Caco-2 (cell line): ENCODE measurements at regions of chr10 and their contacts with region 1.

Region 1: GRCh38 chr10:133245439-133246235 is 8.0 kb downstream of the VENTX start:
- DNase-seq: peak; percentile 91 to 94
- H3K4me3 ChIP-seq: no peak overlapping the region
- H3K4me3 Mint-ChIP-seq: no peak overlapping the region
- H3K27ac Mint-ChIP-seq: peak overlapping the region; percentile 15
- H3K4me1 ChIP-seq: peaks cover 43% of the 10 kb centered on the region
- H3K4me1 Mint-ChIP-seq: peaks cover 13% of the 10 kb centered on the region
- H3K27me3 ChIP-seq: no peaks in the 10 kb centered on the region
- H3K27me3 Mint-ChIP-seq: no peaks in the 10 kb centered on the region
- CTCF ChIP-seq: no peak

Region 2: DNA sequence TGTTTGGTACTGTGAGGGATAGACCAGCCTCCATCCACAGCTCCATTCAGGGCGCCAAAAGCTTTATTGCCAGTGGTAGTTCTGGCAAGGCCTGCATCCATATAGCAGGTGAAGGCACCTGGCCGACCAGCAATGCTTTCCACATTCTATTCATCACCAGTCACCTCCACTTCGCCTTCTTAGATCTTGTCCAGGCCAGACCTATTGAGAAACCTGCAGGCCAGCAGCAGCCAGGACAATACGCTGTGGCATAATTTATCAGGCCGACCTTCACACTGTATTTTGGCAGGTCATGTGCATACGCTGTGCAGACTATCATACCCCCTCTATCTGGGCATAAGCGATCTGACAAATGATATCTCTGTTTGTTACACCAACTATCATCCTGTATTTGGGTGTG is 100.9 kb before region 1 on chr10:
- CTCF ChIA-PET with region 1: interaction called, 9 read pairs
- POLR2A ChIA-PET with region 1: no interaction called
- intact Hi-C with region 1: loop called (anchors 1 kb)
- DNase-seq: peak in 1 of 2 experiments; percentile 35
- H3K4me3 ChIP-seq: no peak overlapping the region
- H3K4me3 Mint-ChIP-seq: peak overlapping the region; percentile 75
- H3K27ac Mint-ChIP-seq: peak overlapping the region; percentile 4
- H3K4me1 ChIP-seq: peaks cover 37% of the 10 kb centered on the region
- H3K4me1 Mint-ChIP-seq: peaks cover 16% of the 10 kb centered on the region
- H3K27me3 ChIP-seq: no peaks in the 10 kb centered on the region
- H3K27me3 Mint-ChIP-seq: no peaks in the 10 kb centered on the region
- CTCF ChIP-seq: no peak

Region 3: GRCh38 chr10:133261726-133262325 is 16.2 kb after region 1 on chr10:
- CTCF ChIA-PET with region 1: interaction called, 37 read pairs
- POLR2A ChIA-PET with region 1: interaction called, 7 read pairs
- intact Hi-C with region 1: no loop called
- DNase-seq: peak; percentile 90 to 91
- H3K4me3 ChIP-seq: peak overlapping the region; percentile 47
- H3K4me3 Mint-ChIP-seq: peak overlapping the region; percentile 64
- H3K27ac Mint-ChIP-seq: no peak overlapping the region
- H3K4me1 ChIP-seq: peaks cover 28% of the 10 kb centered on the region
- H3K4me1 Mint-ChIP-seq: peaks cover 18% of the 10 kb centered on the region
- H3K27me3 ChIP-seq: no peaks in the 10 kb centered on the region
- H3K27me3 Mint-ChIP-seq: no peaks in the 10 kb centered on the region
- CTCF ChIP-seq: no peak

Region 4: DNA sequence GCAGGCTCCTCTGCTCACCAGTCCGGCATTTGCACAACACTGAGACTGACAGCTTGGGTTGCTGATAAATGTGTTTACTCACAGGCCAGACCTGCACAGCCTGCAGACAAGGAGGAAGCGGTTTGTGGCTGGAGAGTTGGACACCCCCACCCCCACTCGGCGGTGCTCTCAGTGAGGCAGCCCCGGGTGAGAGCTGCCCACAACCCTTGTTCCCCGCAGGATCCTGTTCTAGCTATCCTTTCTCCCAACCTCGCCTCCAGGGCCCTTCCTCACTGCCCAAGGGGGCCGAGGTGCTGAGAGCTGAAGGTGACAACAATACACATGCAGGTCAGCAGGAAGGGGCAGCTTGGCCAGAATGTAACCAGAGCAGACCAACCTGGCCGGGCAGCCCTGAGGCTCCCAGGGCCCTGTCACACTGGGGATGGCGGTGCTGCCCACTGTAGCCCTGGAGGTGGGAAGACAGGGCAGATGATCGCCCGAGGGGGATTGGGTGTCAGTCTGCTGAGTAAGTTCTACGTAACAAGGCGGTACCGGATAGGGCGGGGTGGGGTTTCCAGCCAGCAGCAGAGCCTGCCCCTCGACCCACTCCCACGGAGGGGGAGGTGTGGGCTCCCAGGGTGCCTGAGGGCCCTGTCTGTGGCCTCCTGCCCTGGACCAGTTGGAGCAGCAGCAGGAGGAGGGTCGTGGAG is 33.1 kb after region 1 on chr10:
- CTCF ChIA-PET with region 1: interaction called, 7 read pairs
- POLR2A ChIA-PET with region 1: no interaction called
- intact Hi-C with region 1: loop called (anchors 1 kb)
- DNase-seq: peak; percentile 80 to 86
- H3K4me3 ChIP-seq: no peak overlapping the region
- H3K4me3 Mint-ChIP-seq: peak overlapping the region; percentile 33
- H3K27ac Mint-ChIP-seq: peak overlapping the region; percentile 74
- H3K4me1 ChIP-seq: peaks cover 53% of the 10 kb centered on the region
- H3K4me1 Mint-ChIP-seq: peaks cover 11% of the 10 kb centered on the region
- H3K27me3 ChIP-seq: no peaks in the 10 kb centered on the region
- H3K27me3 Mint-ChIP-seq: no peaks in the 10 kb centered on the region
- CTCF ChIP-seq: no peak

Region 5: GRCh38 chr10:133297505-133297904 is 51.9 kb after region 1 on chr10:
- CTCF ChIA-PET with region 1: no interaction called
- POLR2A ChIA-PET with region 1: no interaction called
- intact Hi-C with region 1: no loop called
- DNase-seq: no peak
- H3K4me3 ChIP-seq: no peak overlapping the region
- H3K4me3 Mint-ChIP-seq: no peak overlapping the region
- H3K27ac Mint-ChIP-seq: no peak overlapping the region
- H3K4me1 ChIP-seq: no peaks in the 10 kb centered on the region
- H3K4me1 Mint-ChIP-seq: no peaks in the 10 kb centered on the region
- H3K27me3 ChIP-seq: no peaks in the 10 kb centered on the region
- H3K27me3 Mint-ChIP-seq: no peaks in the 10 kb centered on the region
- CTCF ChIP-seq: no peak